ENCODE measurements at regions of chr11 and their contacts with region 1.

Region 1: DNA sequence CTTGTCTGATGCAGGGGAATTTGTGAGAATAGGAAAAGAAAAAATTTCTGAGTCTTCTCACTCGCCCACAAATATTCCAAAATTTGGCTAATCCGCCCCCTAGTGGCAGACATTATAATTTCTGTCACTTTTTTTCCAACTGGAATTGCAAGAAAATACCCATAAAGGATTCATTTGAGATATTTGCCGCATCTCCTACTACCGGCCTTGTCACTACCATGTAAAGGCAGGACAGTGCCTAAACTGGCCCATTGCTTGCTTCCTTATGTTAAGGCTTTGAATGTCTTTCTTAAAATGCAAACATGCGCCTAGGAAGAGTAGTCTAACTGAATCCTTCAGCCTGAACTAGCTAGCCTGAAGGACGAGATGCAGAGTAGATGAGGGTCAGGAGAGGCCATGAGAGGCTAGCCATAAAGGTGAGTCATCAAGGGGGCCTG is 9.3 kb upstream of the CEP295 start:
- H3K4me3 Mint-ChIP-seq: no peak overlapping the region
- H3K27ac Mint-ChIP-seq: no peak overlapping the region
- H3K4me1 Mint-ChIP-seq: peaks cover 36% of the 10 kb centered on the region
- H3K27me3 Mint-ChIP-seq: peaks cover 4% of the 10 kb centered on the region

Region 2: DNA sequence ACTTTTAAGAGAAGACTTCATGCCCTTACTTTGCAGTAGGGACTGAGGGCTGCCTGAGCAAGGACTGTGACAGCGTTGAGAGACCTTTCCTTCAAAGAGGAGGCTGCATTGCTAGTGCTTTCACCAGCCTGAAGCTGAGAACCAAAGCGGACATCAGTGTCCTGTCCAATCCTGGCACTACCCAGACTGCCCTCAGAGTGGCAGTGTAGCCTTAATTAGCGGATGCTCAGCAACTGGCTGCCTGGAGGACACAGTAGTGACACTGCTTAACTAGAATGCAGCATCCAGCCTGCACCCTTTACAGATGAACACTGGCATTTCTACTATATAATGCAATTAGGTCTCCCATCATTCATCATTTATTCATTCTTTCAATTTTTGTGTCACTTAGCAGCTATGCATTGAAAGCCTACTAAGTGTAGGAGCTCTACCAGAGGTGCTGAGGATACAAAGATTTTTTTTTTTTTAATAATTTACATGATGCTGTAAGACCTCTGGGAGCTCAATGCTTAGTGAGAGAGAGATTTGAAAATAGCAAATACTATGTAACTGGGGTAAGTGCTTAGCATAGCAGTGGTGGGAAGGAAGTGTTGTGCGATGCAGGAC is 417.5 kb before region 1 on chr11:
- intact Hi-C with region 1: loop called (anchors 1 kb)
- H3K4me3 Mint-ChIP-seq: no peak overlapping the region
- H3K27ac Mint-ChIP-seq: no peak overlapping the region
- H3K4me1 Mint-ChIP-seq: no peaks in the 10 kb centered on the region
- H3K27me3 Mint-ChIP-seq: peaks cover 9% of the 10 kb centered on the region